Calu3 (cell line): ENCODE measurements at regions of chr16 and their contacts with region 1.

Region 1: DNA sequence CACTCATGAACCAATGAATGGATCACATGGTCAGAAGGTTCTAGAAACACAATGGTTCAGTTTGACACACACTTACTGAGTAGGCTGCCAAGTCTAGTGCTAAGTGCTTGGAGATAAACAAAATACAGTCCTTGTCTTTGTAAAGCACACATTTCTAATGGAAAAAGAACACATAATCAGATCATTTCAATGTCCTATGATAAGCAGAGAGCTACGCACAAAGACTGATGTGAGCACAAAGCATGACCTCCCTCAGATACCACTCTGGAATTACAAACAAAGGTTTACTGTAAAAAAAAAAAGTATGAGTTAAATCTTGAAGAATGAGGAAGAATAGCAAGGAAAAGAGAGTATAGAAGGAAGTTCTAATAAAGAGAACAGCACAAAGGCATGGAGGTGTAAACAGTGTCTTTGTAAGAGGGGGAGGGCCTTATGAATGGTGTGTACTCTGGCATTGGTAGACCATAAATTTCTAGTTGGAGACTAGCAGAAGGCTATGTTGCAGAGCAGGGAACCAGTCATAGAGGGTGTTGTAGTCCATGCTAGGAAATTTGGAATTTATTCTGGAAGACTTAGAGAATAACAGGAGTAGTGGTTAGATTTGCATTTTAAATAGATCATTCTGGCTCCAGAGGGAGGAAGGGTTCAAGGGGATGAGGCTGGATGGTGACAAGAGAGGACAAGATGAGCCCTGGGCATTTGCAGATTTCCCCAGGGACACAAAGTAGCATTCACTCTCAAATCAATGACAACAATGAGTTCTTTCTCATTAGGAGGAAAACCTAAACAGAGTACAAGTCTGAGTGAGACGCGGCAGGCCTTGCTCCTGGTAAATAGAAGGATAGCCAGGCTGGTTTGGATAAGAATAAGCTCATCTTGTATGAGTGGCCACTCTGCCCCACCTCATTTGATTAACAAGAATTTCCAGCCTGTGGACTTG is 468.0 kb downstream of the TOX3 start:
- DNase-seq: peak; percentile 41
- H3K4me3 Mint-ChIP-seq: peak overlapping the region; percentile 0
- H3K27ac Mint-ChIP-seq: peak overlapping the region; percentile 89
- H3K4me1 Mint-ChIP-seq: peaks cover 38% of the 10 kb centered on the region
- H3K27me3 Mint-ChIP-seq: no peaks in the 10 kb centered on the region
- CTCF ChIP-seq: no peak

Region 2: DNA sequence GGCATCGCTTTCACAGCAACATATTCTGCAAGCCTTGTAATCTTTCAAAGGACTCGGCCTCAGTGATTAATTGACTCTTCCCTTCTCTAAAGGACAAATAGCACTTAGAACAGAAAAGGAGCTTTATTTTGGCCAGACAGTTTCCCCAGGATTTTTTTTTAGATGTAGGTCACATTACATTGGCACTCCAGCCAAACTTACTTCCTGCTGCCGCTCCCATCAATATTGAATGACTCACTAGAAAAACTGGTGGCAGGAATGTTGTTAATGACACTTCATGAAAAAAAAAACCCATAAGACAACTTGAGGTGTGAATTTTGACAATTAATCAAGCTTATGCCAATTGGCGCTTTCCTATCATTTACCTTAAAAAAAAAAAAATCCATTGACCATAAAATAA is 35.4 kb after region 1 on chr16:
- CTCF ChIA-PET with region 1: interaction called, 3 read pairs
- intact Hi-C with region 1: loop called (anchors 1 kb)
- DNase-seq: peak; percentile 61
- H3K4me3 Mint-ChIP-seq: peak overlapping the region; percentile 3
- H3K27ac Mint-ChIP-seq: peak overlapping the region; percentile 58
- H3K4me1 Mint-ChIP-seq: peaks cover 28% of the 10 kb centered on the region
- H3K27me3 Mint-ChIP-seq: no peaks in the 10 kb centered on the region
- CTCF ChIP-seq: no peak